Tibial artery (tissue), 4 donors: ENCODE measurements at regions of chr3 and their contacts with region 1.

Region 1: GRCh38 chr3:189680723-189681122 is 49.5 kb downstream of the TP63 start:
- DNase-seq: no peak
- H3K4me3 ChIP-seq: no peak overlapping the region
- H3K27ac ChIP-seq: no peak overlapping the region
- H3K4me1 ChIP-seq: no peaks in the 10 kb centered on the region
- H3K27me3 ChIP-seq: no peaks in the 10 kb centered on the region
- CTCF ChIP-seq: no peak

Region 2: DNA sequence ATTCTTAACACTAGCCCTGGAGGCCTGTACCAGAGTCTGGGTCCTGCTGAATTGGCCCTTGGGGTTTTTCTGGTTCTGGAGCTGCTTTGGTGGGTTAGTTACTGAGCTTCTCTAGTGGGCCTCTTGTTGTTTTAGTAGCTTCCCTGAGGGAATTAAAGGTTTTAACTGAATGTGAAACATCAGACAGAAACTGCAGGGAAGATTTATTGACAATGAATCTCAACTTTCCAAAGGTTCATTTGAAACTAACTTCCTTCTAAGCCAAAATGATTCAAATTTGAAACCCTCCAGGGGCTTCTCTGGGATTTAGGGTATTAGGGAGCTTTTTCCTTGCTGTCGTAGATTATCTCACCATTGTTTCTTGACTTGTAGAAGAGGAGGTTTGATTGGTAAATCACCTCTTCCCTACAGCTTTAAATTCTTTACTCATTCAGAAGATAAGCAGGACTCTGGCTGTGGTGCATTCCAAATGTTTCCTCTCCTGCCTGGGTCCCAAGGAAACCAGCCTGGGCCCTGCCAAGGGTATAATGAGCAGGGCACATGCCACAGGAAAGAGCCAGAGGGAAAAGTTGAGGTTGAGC is 21.4 kb after region 1 on chr3:
- intact Hi-C with region 1: loop called (anchors 1 kb)
- DNase-seq: no peak
- H3K4me3 ChIP-seq: no peak overlapping the region
- H3K27ac ChIP-seq: no peak overlapping the region
- H3K4me1 ChIP-seq: no peaks in the 10 kb centered on the region
- H3K27me3 ChIP-seq: no peaks in the 10 kb centered on the region
- CTCF ChIP-seq: no peak